ENCODE measurements at regions of chr12 and their contacts with region 1.

Region 1: GRCh38 chr12:104890476-104891096 is 67.5 kb downstream of the SLC41A2 start:
- DNase-seq: no peak
- ATAC-seq: no peak
- H3K4me3 ChIP-seq: no peak overlapping the region
- H3K27ac ChIP-seq: no peak overlapping the region
- H3K4me1 ChIP-seq: peaks cover 7% of the 10 kb centered on the region
- H3K27me3 ChIP-seq: no peaks in the 10 kb centered on the region
- CTCF ChIP-seq: no peak
- EP300 ChIP-seq: no peak
- POLR2A ChIP-seq: no peak
- RAD21 ChIP-seq: no peak

Region 2: GRCh38 chr12:104064031-104064822 is 826.4 kb before region 1 on chr12 and contains the start of gene HCFC2:
- CTCF ChIA-PET with region 1: no interaction called
- POLR2A ChIA-PET with region 1: no interaction called
- in situ Hi-C with region 1: no loop called
- intact Hi-C with region 1: loop called (anchors 10 kb)
- DNase-seq: peak; percentile 75
- ATAC-seq: peak; percentile 93
- H3K4me3 ChIP-seq: peak within 1 kb of the TSS; percentile 93 to 98 (median 97)
- H3K27ac ChIP-seq: peak within 1 kb of the TSS; percentile 59
- H3K4me1 ChIP-seq: peaks cover 16% of the 10 kb centered on the region
- H3K27me3 ChIP-seq: no peaks in the 10 kb centered on the region; a peak in 1 of 5 replicates
- CTCF ChIP-seq: peak; percentile 16; the same call in 1 of the 2 replicates
- EP300 ChIP-seq: no peak; a peak in 1 of 4 replicates
- POLR2A ChIP-seq: peak; percentile 47 to 73; a peak in 2 of 4 replicates
- RAD21 ChIP-seq: no peak; the same call in 1 of the 2 replicates
- total RNA-seq, gene HCFC2: 4.9 and 5.6 TPM in 2 replicates

Region 3: GRCh38 chr12:104339663-104340062 is 550.9 kb before region 1 on chr12:
- CTCF ChIA-PET with region 1: no interaction called
- POLR2A ChIA-PET with region 1: no interaction called
- in situ Hi-C with region 1: no loop called
- intact Hi-C with region 1: no loop called
- DNase-seq: no peak
- ATAC-seq: no peak
- H3K4me3 ChIP-seq: no peak overlapping the region
- H3K27ac ChIP-seq: no peak overlapping the region
- H3K4me1 ChIP-seq: no peaks in the 10 kb centered on the region
- H3K27me3 ChIP-seq: no peaks in the 10 kb centered on the region
- CTCF ChIP-seq: no peak
- EP300 ChIP-seq: no peak
- POLR2A ChIP-seq: no peak
- RAD21 ChIP-seq: no peak

Region 4: DNA sequence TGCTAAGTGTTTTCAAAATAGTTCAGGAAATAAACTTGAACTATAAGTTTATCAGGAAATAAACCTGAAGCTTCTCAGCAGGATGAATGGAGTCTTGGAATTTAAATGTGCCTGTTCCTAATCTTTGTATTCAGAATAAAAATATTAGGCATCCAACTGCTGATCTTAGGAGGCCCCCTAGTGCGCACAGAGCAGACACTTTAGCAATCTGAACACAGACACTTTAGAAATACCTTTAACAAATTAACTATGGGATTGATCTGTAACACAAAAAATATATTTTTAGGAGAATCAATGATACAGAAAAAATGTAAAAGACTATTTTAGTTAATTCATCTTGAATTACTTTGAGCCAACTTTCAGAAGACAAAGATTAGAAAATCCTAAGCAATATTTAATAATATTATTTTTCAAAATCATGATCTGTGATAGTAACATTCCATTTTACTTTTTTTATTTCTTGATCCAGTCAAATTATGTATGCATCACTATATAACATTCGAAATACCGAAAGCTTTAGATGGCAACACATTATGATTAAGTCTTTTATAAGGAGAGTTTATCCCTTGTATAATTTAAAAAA is 13.4 kb before region 1 on chr12:
- CTCF ChIA-PET with region 1: no interaction called
- POLR2A ChIA-PET with region 1: no interaction called
- in situ Hi-C with region 1: no loop called
- intact Hi-C with region 1: no loop called
- DNase-seq: no peak
- ATAC-seq: no peak
- H3K4me3 ChIP-seq: no peak overlapping the region
- H3K27ac ChIP-seq: no peak overlapping the region
- H3K4me1 ChIP-seq: no peaks in the 10 kb centered on the region
- H3K27me3 ChIP-seq: no peaks in the 10 kb centered on the region
- CTCF ChIP-seq: peak; percentile 37; the same call in 1 of the 2 replicates
- EP300 ChIP-seq: no peak
- POLR2A ChIP-seq: no peak
- RAD21 ChIP-seq: no peak